ENCODE measurements at regions of chr6 and their contacts with region 1.

Region 1: GRCh38 chr6:160221423-160221822 is 37.2 kb downstream of the SLC22A2 start:
- DNase-seq: no peak
- H3K4me3 Mint-ChIP-seq: no peak overlapping the region
- H3K27ac Mint-ChIP-seq: no peak overlapping the region
- H3K4me1 Mint-ChIP-seq: peaks cover 10% of the 10 kb centered on the region
- H3K27me3 Mint-ChIP-seq: peaks cover 18% of the 10 kb centered on the region

Region 2: DNA sequence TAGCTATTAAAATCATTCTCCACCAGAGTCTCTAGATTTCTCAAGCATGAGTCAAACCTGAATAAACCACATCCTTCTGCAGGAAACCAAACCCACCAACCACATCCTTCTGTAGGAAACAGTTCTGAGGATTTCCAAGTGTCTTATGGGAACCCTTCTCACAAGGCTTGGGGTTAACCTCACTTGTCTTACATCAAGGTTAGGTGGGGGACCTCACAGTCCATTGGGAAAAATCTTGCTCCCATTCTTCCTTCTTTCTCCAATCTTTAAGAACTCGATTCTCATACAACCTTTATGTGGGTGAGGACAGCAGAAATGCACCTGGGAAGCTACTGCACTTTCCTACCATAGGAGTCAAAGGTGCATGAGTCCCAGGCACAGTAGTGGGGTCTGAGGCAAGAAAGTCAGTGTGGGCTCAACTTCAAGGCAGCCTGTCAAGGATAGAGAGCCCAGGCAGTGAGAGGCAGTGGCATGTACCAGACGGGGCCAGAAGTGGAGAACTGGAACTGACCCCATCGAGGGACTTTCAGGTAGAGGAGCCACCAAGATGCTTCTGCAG is 241.2 kb after region 1 on chr6:
- CTCF ChIA-PET with region 1: no interaction called
- POLR2A ChIA-PET with region 1: no interaction called
- intact Hi-C with region 1: loop called (anchors 2 kb)
- DNase-seq: peak; percentile 64
- H3K4me3 Mint-ChIP-seq: peak overlapping the region; percentile 42
- H3K27ac Mint-ChIP-seq: peak overlapping the region; percentile 68
- H3K4me1 Mint-ChIP-seq: peaks cover 72% of the 10 kb centered on the region
- H3K27me3 Mint-ChIP-seq: peaks cover 14% of the 10 kb centered on the region